Aorta (tissue), 5 donors: ENCODE measurements at regions of chr1 and their contacts with region 1.

Region 1: DNA sequence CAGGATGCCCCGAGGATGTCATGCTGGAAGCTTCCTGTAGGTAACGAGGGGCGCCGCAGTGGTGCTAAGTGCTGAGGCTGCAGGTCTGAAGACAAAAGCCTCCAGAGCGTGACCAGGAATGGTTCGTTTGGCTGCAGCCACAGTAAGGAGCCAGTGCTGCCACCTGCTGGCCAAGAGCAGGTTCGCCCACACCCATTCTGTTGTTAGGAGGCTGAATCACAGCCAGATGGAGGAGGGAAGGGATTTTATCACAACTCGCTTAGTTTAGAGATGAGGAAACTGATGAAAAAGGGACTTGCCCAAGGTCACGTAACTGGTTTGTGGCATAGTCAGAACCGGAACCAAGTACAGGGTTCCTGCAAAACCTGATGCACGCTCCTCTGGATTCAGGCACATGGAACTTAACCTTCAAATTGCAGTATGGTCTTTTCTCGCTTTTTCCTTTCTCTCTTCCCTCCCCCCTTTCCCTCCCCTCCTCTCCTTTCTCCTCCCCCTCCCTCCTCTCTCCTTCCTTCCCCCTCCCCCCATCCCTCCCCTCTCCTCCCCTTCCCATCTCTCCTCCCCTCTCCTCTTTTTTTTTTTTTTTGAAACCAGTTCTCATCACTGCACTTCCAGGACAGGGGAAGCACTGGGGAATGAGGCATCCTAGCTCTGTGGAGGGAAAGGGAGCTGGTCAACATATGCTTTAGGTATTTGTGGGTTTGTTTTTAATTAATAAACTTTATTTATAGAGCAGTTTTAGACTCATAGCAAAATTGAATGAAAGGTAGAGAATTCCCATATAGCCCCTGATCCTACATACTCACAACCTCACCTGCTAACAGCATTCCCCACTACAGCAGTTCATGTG is 81.8 kb downstream of the MPZL1 start:
- DNase-seq: peak; percentile 96 to 98
- ATAC-seq: peak; percentile 94
- H3K4me3 ChIP-seq: no peak overlapping the region
- H3K27ac ChIP-seq: no peak overlapping the region
- H3K4me1 ChIP-seq: no peaks in the 10 kb centered on the region
- H3K27me3 ChIP-seq: no peaks in the 10 kb centered on the region

Region 2: DNA sequence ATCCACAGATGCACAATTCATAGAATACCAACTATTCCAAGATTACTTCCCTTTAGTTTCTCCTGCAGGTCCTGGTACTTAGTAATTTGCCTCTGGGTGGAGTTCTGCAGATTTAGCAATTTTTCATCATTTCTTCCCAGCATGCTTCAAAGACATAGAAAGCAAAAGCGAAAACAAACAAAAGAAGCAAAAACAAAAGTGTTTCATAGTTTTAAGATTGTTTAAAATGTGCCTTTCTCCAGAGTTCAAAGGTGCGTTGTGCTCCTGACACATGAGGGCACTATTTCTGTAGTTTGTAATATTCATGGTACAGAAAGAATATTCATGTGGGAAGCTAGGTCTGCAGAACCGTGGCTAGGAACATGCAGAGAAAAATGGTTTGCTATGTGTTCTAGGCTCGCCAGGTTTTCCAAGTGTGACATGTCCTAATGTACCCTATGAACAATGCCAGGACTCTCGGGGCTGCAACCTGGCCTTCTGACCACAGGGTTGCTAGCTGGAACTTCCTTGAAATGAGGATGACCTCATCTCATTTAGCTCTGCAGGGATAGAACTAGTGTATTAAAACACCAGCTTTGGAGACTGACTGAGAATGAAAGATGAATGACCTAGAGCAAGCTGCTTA is 203.5 kb before region 1 on chr1:
- intact Hi-C with region 1: loop called in 1 of 2 experiments (anchors 5 kb)
- DNase-seq: peak in 1 of 2 donors; percentile 59
- ATAC-seq: peak; percentile 83
- H3K4me3 ChIP-seq: no peak overlapping the region
- H3K27ac ChIP-seq: no peak overlapping the region
- H3K4me1 ChIP-seq: no peaks in the 10 kb centered on the region
- H3K27me3 ChIP-seq: no peaks in the 10 kb centered on the region

Region 3: DNA sequence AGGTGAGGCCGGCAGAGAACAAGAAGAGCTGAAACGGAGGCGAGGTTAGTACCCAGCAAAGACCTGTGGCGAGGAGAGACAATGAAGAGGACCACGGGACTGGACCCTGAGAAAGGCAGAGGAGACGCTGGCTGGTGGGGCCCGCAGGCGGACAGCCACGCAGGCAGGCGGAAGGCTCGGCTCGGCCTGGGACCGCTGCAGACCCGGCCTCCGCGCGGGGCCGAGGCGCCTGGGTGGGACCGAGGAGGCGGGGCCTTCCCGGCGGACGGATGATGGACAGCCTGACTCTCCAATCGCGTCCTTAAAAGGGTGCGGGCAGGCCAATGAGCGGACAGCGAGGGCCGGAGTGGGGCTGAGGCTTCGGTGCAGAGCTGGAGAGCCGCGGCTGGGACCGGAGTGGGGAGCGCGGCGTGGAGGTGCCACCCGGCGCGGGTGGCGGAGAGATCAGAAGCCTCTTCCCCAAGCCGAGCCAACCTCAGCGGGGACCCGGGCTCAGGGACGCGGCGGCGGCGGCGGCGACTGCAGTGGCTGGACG is 81.9 kb before region 1 on chr1 and contains the start of gene MPZL1:
- intact Hi-C with region 1: loop called (anchors 2 to 5 kb)
- DNase-seq: peak; percentile 97 to 98
- ATAC-seq: peak; percentile 98
- H3K4me3 ChIP-seq: peak within 1 kb of the TSS; percentile 93 to 96
- H3K27ac ChIP-seq: peak within 1 kb of the TSS; percentile 85 to 97
- H3K4me1 ChIP-seq: peaks cover 7 to 12% of the 10 kb centered on the region in 2 donors
- H3K27me3 ChIP-seq: no peaks in the 10 kb centered on the region
- total RNA-seq, gene MPZL1: 101 to 148 TPM

Region 4: GRCh38 chr1:167849666-167850065 is 46.1 kb after region 1 on chr1:
- intact Hi-C with region 1: no loop called
- DNase-seq: no peak
- ATAC-seq: no peak
- H3K4me3 ChIP-seq: no peak overlapping the region
- H3K27ac ChIP-seq: no peak overlapping the region
- H3K4me1 ChIP-seq: no peaks in the 10 kb centered on the region
- H3K27me3 ChIP-seq: no peaks in the 10 kb centered on the region